HCT116 (cell line): ENCODE measurements at regions of chr12 and their contacts with region 1.

Region 1: GRCh38 chr12:75677522-75677921 is 166.1 kb upstream of the KRR1 start:
- DNase-seq: no peak
- ATAC-seq: no peak
- H3K4me3 ChIP-seq: no peak overlapping the region
- H3K27ac ChIP-seq: no peak overlapping the region
- H3K4me1 ChIP-seq: peaks cover under 1 to 5% of the 10 kb centered on the region in 2 experiments; a peak in 2 of 4 replicates
- H3K27me3 ChIP-seq: no peaks in the 10 kb centered on the region
- CTCF ChIP-seq: no peak
- POLR2A ChIP-seq: no peak
- RAD21 ChIP-seq: no peak

Region 2: GRCh38 chr12:75666939-75667334 is 10.6 kb before region 1 on chr12:
- CTCF ChIA-PET with region 1: no interaction called
- POLR2A ChIA-PET with region 1: interaction called, 10 read pairs
- RAD21 ChIA-PET with region 1: no interaction called
- intact Hi-C with region 1: no loop called
- DNase-seq: peak; percentile 54
- ATAC-seq: peak; percentile 73
- H3K4me3 ChIP-seq: no peak overlapping the region
- H3K27ac ChIP-seq: peak overlapping the region; percentile 99
- H3K4me1 ChIP-seq: peaks cover 67 to 79% of the 10 kb centered on the region in 2 experiments
- H3K27me3 ChIP-seq: no peaks in the 10 kb centered on the region
- CTCF ChIP-seq: no peak
- POLR2A ChIP-seq: no peak
- RAD21 ChIP-seq: no peak; the same call in 1 of the 2 replicates

Region 3: DNA sequence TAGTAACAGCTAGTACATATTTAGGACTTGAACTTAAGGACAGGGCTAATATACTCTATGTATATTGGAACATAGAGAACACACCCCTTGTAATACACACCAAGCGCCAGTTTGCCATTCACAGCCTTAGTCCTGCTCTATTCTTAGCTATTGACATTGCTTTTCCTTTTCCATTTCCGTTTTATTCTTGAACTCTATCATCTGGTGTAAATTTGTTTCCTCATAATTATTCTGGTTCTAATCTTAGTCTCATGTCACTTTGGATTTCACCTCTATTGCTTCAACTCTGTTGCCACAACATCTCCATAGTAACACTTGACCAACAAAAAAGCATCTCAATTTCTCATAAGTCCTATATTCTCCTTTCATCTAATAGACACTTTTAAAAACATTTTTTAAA is 128.4 kb after region 1 on chr12:
- CTCF ChIA-PET with region 1: no interaction called
- POLR2A ChIA-PET with region 1: no interaction called
- RAD21 ChIA-PET with region 1: no interaction called
- intact Hi-C with region 1: no loop called
- DNase-seq: no peak
- ATAC-seq: no peak
- H3K4me3 ChIP-seq: no peak overlapping the region
- H3K27ac ChIP-seq: 0 out of 2 replicates have a peak overlapping the region, but pooled peaks have one; percentile 14
- H3K4me1 ChIP-seq: peaks cover 13 to 16% of the 10 kb centered on the region in 2 experiments
- H3K27me3 ChIP-seq: no peaks in the 10 kb centered on the region
- CTCF ChIP-seq: no peak
- POLR2A ChIP-seq: no peak
- RAD21 ChIP-seq: no peak